ENCODE measurements at regions of chr14 and their contacts with region 1.

Region 1: GRCh38 chr14:21437063-21437901 is 18.6 kb downstream of the CHD8 start:
- DNase-seq: peak; percentile 99
- H3K4me3 ChIP-seq: peak overlapping the region; percentile 93
- H3K4me3 Mint-ChIP-seq: peak overlapping the region; percentile 96
- H3K27ac Mint-ChIP-seq: peak overlapping the region; percentile 94
- H3K4me1 ChIP-seq: peaks cover 10% of the 10 kb centered on the region
- H3K4me1 Mint-ChIP-seq: peaks cover 13% of the 10 kb centered on the region
- H3K27me3 ChIP-seq: no peaks in the 10 kb centered on the region
- H3K27me3 Mint-ChIP-seq: no peaks in the 10 kb centered on the region
- CTCF ChIP-seq: no peak

Region 2: DNA sequence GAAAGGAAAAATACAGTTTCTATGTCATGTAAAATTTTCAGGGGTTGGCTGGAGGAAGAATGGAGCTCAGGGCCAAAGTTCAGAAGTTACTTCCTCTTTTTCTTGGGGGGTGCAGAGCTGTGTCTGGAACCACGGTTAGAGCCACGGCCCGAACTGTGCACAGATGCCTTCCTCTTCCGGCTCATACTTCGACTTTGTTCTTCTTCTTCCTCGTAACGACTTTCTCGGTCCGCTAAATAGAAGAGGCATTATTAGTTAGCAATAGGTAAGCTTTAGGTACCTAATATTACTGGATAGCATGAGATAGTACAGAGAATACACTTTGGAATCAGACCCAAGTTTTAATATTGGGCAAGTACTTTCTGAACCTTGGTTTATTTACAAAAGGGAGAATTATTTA is 84.7 kb before region 1 on chr14:
- CTCF ChIA-PET with region 1: no interaction called
- POLR2A ChIA-PET with region 1: no interaction called
- intact Hi-C with region 1: no loop called
- DNase-seq: no peak
- H3K4me3 ChIP-seq: no peak overlapping the region
- H3K4me3 Mint-ChIP-seq: no peak overlapping the region
- H3K27ac Mint-ChIP-seq: no peak overlapping the region
- H3K4me1 ChIP-seq: no peaks in the 10 kb centered on the region
- H3K4me1 Mint-ChIP-seq: no peaks in the 10 kb centered on the region
- H3K27me3 ChIP-seq: no peaks in the 10 kb centered on the region
- H3K27me3 Mint-ChIP-seq: no peaks in the 10 kb centered on the region
- CTCF ChIP-seq: no peak

Region 3: DNA sequence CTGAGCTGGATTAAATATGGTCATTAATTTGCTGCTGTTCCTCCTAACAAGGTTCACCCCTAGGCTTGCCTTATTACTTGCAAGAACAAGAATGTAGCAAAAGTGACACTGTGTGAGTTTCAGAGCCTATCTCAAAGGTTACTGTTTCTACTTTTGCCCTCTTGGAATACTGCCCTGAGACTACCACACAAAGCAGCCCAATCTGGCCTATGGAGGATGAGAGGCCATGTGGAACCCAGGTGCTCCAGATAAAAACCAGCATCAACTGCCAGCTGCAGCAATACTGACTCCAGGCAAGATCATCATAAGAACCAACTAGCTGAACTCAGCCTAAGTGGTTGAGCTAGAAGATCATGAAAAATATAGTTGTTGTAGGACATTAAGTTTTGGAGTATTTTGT is 31.1 kb before region 1 on chr14:
- CTCF ChIA-PET with region 1: no interaction called
- POLR2A ChIA-PET with region 1: no interaction called
- intact Hi-C with region 1: loop called (anchors 1 kb)
- DNase-seq: no peak
- H3K4me3 ChIP-seq: no peak overlapping the region
- H3K4me3 Mint-ChIP-seq: no peak overlapping the region
- H3K27ac Mint-ChIP-seq: no peak overlapping the region
- H3K4me1 ChIP-seq: no peaks in the 10 kb centered on the region
- H3K4me1 Mint-ChIP-seq: no peaks in the 10 kb centered on the region
- H3K27me3 ChIP-seq: no peaks in the 10 kb centered on the region
- H3K27me3 Mint-ChIP-seq: no peaks in the 10 kb centered on the region
- CTCF ChIP-seq: no peak

Measured in Caco-2 (cell line).